ENCODE measurements at regions of chr13 and their contacts with region 1.

Region 1: GRCh38 chr13:111429064-111429558 is 108.7 kb downstream of the TEX29 start:
- DNase-seq: peak; percentile 61
- H3K4me3 Mint-ChIP-seq: no peak overlapping the region
- H3K27ac Mint-ChIP-seq: no peak overlapping the region
- H3K4me1 Mint-ChIP-seq: no peaks in the 10 kb centered on the region
- H3K27me3 Mint-ChIP-seq: peaks cover 34% of the 10 kb centered on the region
- CTCF ChIP-seq: peak; percentile 31

Region 2: DNA sequence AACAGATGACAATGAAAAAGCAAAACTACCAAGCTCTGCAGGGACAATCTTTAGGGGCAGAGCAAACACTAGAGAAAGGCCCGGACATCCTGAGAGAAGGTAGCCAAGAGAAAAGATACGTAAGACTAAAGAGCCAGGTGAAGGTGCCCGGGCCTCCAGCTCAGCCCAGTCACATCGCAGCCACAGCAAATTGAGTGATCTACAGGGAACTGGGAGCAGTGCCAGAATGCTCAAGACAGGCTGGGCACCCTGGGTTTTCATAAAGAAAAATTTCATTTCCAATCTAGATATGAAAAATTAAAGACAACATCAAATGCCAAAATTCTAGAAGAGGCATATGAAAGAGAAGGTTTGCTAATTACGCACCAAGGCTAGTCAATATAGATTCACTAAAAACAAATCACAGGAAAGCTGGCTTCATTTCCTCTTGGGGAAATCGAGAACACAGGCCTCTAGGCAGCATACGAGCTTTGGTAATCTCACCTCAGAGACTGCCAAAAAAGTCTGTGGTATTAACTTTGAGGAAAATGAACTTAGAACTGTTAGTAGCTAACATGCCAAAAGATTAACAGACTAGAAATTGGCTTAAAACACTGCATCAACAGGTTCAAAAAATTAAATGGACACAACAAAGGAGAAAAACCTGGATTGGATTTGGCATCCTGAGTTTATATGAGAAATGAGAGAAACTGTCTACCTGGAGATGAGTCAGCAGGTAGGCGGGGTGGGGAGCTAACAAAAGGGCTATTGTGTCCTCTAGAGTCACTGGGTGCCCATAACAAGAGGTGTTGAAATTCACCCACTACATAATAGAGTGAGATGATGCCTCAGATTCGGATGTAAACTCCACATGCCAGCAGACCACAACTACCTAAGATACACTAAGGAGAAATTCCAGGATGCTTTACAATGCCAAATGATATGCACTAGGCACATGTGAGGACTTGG is 520.9 kb before region 1 on chr13:
- CTCF ChIA-PET with region 1: no interaction called
- POLR2A ChIA-PET with region 1: no interaction called
- intact Hi-C with region 1: no loop called
- DNase-seq: peak; percentile 91
- H3K4me3 Mint-ChIP-seq: no peak overlapping the region
- H3K27ac Mint-ChIP-seq: peak overlapping the region; percentile 79
- H3K4me1 Mint-ChIP-seq: peaks cover 43% of the 10 kb centered on the region
- H3K27me3 Mint-ChIP-seq: no peaks in the 10 kb centered on the region
- CTCF ChIP-seq: no peak

Region 3: DNA sequence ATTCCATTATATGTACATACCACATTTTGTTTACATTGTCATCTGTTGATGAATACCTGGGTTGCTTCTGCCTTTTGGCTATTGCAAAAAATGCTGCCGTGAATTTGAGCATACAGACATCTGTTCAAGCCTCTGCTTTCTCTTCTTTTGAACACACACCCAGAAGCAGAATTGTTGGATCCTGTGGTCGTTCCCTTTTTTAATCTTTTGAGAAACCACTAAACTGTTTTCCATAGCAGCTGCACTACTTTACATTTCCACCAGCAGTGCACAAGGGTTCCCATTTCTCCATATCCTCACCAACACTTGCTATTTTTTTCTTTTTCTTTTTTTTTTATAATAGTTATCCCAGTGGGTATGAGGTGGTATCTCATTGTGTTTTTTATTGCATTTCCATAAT is 14.9 kb after region 1 on chr13:
- CTCF ChIA-PET with region 1: interaction called, 10 read pairs
- POLR2A ChIA-PET with region 1: no interaction called
- intact Hi-C with region 1: no loop called
- DNase-seq: no peak
- H3K4me3 Mint-ChIP-seq: no peak overlapping the region
- H3K27ac Mint-ChIP-seq: no peak overlapping the region
- H3K4me1 Mint-ChIP-seq: no peaks in the 10 kb centered on the region
- H3K27me3 Mint-ChIP-seq: peaks cover 15% of the 10 kb centered on the region
- CTCF ChIP-seq: no peak

Region 4: DNA sequence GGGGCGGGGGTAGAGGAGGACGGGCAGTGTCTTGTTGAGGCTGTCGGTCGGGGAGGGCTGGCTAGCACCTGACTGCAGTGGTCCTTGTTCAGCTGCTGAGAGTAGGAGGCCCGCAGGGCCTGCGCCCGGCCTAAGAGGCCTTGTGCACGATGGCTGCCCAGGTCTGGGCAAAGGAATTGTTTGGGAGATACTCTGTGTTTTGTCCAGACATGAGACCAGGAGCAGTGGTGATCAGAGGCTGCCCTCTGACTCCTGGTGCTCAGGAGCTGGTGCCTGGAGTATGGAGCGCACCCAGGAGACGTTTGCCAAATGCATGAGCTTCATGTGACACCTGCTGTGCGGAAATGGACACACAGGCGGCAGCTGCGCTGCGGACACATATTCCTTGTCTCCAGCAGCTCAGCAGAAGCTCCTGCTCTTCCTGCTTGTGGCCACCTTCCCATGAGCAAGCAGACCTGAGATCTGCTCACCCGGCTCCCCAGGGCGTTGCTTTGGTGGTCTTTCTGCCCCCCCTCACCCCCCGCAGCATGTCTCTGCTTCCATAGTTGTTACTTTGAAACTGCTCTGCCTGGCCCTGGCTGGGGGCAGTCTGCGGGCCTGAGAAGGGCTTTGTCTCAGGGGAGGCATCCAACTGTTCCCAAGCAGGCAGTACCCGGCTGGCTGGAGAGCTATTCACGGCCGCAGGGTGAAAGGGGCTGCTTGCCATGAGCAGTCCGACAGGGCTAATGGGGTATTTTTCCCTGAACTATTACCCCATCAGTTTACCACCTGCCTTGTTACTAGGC is 55.2 kb after region 1 on chr13:
- CTCF ChIA-PET with region 1: no interaction called
- POLR2A ChIA-PET with region 1: no interaction called
- intact Hi-C with region 1: no loop called
- DNase-seq: no peak
- H3K4me3 Mint-ChIP-seq: no peak overlapping the region
- H3K27ac Mint-ChIP-seq: no peak overlapping the region
- H3K4me1 Mint-ChIP-seq: no peaks in the 10 kb centered on the region
- H3K27me3 Mint-ChIP-seq: peaks cover 4% of the 10 kb centered on the region
- CTCF ChIP-seq: no peak

Region 5: GRCh38 chr13:111663953-111664421 is 234.9 kb after region 1 on chr13:
- CTCF ChIA-PET with region 1: no interaction called
- POLR2A ChIA-PET with region 1: no interaction called
- intact Hi-C with region 1: no loop called
- DNase-seq: no peak
- H3K4me3 Mint-ChIP-seq: no peak overlapping the region
- H3K27ac Mint-ChIP-seq: no peak overlapping the region
- H3K4me1 Mint-ChIP-seq: no peaks in the 10 kb centered on the region
- H3K27me3 Mint-ChIP-seq: no peaks in the 10 kb centered on the region
- CTCF ChIP-seq: no peak